ENCODE measurements at regions of chr1 and their contacts with region 1.

Region 1: GRCh38 chr1:46442317-46443161 is 47.1 kb upstream of the DMBX1 start:
- DNase-seq: peak; percentile 63
- ATAC-seq: peak; percentile 78
- H3K4me3 Mint-ChIP-seq: peak overlapping the region; percentile 81
- H3K27ac Mint-ChIP-seq: no peak overlapping the region
- H3K4me1 Mint-ChIP-seq: peaks cover 10% of the 10 kb centered on the region
- H3K27me3 Mint-ChIP-seq: peaks cover 35% of the 10 kb centered on the region
- CTCF ChIP-seq: peak; percentile 96

Region 2: GRCh38 chr1:46547481-46548383 is 105.2 kb after region 1 on chr1:
- CTCF ChIA-PET with region 1: no interaction called
- POLR2A ChIA-PET with region 1: no interaction called
- intact Hi-C with region 1: loop called (anchors 5 kb)
- DNase-seq: no peak
- ATAC-seq: no peak
- H3K4me3 Mint-ChIP-seq: no peak overlapping the region
- H3K27ac Mint-ChIP-seq: no peak overlapping the region
- H3K4me1 Mint-ChIP-seq: peaks cover 5% of the 10 kb centered on the region
- H3K27me3 Mint-ChIP-seq: peaks cover 56% of the 10 kb centered on the region
- CTCF ChIP-seq: no peak